ENCODE measurements at regions of chr16 and their contacts with region 1.

Region 1: GRCh38 chr16:3173892-3174617 is 13.9 kb upstream of the OR1F1 start:
- DNase-seq: peak; percentile 62
- H3K4me3 Mint-ChIP-seq: peak overlapping the region; percentile 70
- H3K27ac Mint-ChIP-seq: peak overlapping the region; percentile 50
- H3K4me1 Mint-ChIP-seq: peaks cover 40% of the 10 kb centered on the region
- H3K27me3 Mint-ChIP-seq: peaks cover 57% of the 10 kb centered on the region

Region 2: DNA sequence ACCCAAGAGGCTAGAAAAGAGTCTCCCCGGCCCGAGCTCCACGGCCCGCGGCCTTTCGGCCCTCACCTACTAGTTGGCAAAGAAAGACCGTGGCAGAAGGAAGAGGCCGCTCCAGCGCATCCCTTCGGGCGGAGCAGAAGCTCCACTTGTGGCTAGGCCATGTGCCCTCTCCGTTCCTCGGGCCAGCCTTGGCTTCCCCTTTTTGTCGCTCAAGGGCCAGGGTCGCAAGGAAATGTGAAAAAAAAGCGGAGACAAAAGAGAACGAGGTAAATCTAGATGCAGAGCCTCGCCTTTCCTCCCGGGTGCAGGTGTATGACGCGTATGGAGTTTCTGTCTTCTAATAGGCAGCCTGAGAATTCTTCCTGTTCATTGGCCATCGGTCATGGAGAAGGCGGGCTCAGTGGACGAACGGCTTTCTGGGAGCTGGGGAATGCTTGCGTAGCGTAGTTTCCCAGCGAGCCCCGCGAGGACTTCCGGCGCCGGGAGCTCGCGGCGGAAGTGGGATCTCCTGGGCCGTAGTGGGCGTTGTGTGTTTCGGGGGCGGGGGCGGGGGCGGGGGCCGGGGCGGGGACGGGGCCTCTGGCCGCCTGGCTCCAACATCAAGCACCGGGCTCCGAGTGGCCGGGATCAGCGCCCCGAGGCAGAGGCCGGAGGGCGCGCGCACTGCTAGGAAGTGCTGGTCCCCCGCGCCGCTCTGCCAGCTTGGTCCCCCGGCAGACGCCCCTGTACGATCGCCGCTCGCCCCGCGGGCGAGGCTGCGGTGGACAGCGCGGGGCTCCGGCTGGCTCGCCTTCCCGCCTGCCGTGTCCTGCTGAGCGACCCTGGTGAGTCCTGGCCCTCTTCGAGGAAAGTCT is 39.3 kb before region 1 on chr16 and contains the start of gene ZNF213:
- CTCF ChIA-PET with region 1: interaction called, 37 read pairs
- intact Hi-C with region 1: no loop called
- DNase-seq: peak; percentile 97
- H3K4me3 Mint-ChIP-seq: peak within 1 kb of the TSS; percentile 99
- H3K27ac Mint-ChIP-seq: peak within 1 kb of the TSS; percentile 91
- H3K4me1 Mint-ChIP-seq: peaks cover 29% of the 10 kb centered on the region
- H3K27me3 Mint-ChIP-seq: no peaks in the 10 kb centered on the region
- total RNA-seq, gene ZNF213: 6.1 to 6.5 TPM

Region 3: DNA sequence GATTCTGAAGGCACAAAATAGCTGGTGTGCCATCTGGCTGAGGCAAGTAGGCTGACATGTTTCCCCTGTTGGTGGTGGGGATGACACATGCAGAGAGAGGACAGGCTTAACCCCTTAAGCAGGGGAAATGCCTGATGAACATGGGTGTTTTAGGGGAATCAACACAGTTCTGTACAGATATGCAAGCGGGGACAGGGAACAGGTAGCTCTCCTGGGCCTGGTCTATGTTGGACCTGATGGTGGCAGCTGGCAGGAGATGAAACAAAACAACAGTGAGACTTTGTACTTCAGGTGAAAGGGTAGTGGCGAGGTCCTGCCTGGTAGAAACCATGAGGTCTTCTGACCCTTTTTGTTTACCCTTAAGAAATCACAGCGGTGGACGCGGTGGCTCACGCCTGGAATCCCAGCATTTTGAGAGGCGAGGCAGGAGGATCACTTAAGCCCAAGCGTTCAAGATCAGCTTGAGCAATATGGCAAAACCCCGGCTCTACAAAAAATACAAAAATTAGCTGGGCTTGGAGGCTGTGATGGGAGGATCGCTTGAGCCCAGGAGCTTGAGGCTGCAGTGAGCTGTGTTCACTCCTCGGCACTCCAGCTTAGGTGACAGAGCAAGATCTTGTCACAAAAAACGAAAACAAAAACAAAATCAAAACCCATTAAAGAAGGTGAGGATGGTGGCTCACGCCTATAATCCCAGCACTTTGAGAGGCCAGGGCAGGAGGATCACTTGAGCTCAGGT is 24.4 kb after region 1 on chr16:
- CTCF ChIA-PET with region 1: no interaction called
- intact Hi-C with region 1: no loop called
- DNase-seq: no peak
- H3K4me3 Mint-ChIP-seq: no peak overlapping the region
- H3K27ac Mint-ChIP-seq: no peak overlapping the region
- H3K4me1 Mint-ChIP-seq: no peaks in the 10 kb centered on the region
- H3K27me3 Mint-ChIP-seq: peaks cover 11% of the 10 kb centered on the region

Region 4: GRCh38 chr16:3214904-3215600 is 41.0 kb after region 1 on chr16:
- CTCF ChIA-PET with region 1: no interaction called
- intact Hi-C with region 1: loop called (anchors 1 kb)
- DNase-seq: peak; percentile 76
- H3K4me3 Mint-ChIP-seq: peak overlapping the region; percentile 54
- H3K27ac Mint-ChIP-seq: peak overlapping the region; percentile 96
- H3K4me1 Mint-ChIP-seq: peaks cover 31% of the 10 kb centered on the region
- H3K27me3 Mint-ChIP-seq: no peaks in the 10 kb centered on the region

Region 5: DNA sequence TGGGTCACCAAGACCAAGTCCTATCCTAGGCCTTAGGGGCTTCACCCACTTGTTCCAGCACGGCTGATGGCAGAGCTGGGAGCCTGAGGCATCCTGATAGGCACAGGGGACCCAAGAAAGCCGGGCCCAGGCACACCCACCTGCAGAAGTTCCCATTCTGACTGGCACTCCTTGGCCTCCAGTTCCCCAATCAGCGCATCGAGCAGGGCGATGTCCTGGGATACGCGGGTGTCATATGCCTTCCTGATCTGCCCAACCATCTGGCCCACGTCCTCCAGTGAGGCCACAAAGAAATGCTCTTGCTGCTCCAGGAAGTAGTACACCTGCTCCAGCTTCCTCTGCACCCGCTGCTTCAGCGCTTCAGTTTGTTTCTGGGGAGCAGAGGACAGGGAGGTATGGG is 72.8 kb after region 1 on chr16:
- CTCF ChIA-PET with region 1: no interaction called
- intact Hi-C with region 1: no loop called
- DNase-seq: no peak
- H3K4me3 Mint-ChIP-seq: no peak overlapping the region
- H3K27ac Mint-ChIP-seq: no peak overlapping the region
- H3K4me1 Mint-ChIP-seq: no peaks in the 10 kb centered on the region
- H3K27me3 Mint-ChIP-seq: no peaks in the 10 kb centered on the region

Region 6: DNA sequence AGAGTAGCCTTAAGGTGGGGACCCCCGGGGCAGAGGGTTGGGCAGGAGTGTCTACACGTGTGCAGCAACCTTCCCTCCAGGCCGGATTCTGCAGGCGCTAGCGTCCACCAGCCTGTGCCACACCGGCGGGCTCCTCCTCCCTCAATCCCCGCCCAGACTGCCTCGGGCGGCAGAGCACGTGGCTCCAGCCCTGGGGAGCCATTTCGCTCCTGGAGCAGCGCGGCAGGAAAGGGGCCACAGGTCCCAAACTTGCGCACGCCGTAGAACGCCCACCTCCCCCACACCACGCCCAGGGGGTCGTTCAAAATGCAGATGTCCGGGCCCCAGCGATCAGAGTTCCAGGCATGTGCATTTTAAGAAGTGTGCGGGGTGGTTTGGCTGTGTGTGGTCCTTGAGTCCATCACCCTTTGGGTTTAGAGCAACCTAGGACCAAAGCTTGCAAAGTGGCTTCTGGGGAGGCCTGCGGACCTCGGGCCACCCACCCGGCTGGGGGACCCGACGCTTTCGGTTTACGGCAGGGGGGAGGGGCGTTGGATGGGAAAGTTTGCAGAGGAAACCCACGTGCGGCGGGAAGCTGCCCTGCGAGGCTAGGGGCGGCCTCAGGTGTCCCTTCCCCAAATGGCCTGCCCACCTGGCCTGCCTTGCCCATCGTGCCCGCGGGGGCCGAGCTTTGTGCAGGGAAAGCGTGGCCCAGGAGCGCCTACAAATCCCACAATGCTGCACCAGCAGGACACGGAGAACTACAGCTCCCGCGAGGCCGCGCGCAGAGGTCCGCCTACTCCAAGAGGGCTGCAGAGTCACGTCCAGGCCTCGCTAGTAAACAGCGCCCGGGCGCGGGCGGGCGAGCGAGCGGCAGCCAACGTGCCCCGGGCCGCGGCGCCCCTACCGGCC is 1097.4 kb after region 1 on chr16:
- CTCF ChIA-PET with region 1: no interaction called
- intact Hi-C with region 1: no loop called
- DNase-seq: peak; percentile 95
- H3K4me3 Mint-ChIP-seq: peak overlapping the region; percentile 86
- H3K27ac Mint-ChIP-seq: peak overlapping the region; percentile 94
- H3K4me1 Mint-ChIP-seq: peaks cover 12% of the 10 kb centered on the region
- H3K27me3 Mint-ChIP-seq: no peaks in the 10 kb centered on the region

Measured in activated naive CD4-positive, alpha-beta T cell treated with anti-CD3 and anti-CD28 coated beads for 36 hours (primary cell).